ENCODE measurements at regions of chr9 and their contacts with region 1.

Region 1: DNA sequence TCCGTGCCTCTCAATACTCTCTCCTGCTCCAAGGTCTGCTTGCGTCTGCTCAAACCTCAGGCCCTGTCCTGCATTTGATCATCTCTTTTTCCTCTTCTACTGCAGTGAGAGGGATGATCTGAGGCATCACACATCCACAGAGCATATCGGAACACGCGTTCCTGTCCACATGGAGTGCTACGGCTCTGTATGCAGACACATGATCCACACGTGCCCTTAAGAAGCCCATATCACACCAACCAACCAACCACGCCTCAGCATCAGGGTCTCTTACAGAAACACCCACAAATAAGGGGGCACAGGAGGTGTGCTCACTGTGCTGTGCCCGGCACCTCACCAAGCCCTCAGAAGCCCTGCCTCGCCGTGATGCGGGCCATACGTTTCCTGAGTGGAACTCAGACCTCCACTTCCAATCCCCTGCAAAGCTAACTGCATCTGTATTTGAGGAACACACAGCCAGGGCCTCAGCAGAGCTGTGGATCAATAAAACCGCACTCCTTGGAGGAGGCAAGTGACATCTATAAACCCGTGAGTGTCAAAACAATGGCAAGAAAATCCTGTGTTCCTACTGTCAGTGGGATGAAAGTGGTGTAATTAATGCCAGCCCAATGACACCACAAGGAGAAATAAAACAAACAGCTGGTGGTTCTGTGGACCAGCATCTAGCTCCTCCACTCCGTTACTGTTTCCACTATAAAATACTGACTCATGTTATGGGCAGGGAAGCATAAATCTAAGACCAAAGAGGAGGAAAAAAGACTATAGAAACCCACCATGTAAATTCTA is 40.4 kb downstream of the AK8 start:
- DNase-seq: no peak
- ATAC-seq: no peak
- H3K4me3 ChIP-seq: no peak overlapping the region
- H3K27ac ChIP-seq: no peak overlapping the region
- H3K4me1 ChIP-seq: no peaks in the 10 kb centered on the region; a peak in 1 of 5 replicates
- H3K27me3 ChIP-seq: peaks cover 52 to 68% of the 10 kb centered on the region in 2 experiments
- CTCF ChIP-seq: no peak
- EP300 ChIP-seq: no peak
- POLR2A ChIP-seq: no peak
- RAD21 ChIP-seq: no peak

Region 2: DNA sequence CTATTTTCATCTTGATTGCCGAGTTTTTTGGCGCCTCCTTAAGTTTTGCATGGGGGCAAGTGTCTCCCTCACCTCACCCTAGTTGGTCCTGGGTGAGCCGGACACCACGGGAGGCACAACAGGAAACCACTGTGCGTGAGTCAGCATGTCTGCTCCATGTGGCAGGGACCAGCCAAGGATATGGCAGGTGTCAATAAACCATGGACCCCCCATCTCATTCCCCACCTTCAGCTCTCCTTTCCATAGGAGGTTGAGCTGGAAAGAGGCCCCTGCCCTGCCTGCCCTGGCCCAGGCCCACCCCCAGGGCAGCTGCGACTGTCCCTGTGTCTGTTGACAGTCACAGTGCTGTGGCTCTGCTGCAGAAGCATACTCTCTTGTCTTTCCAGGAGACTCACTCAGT is 44.1 kb after region 1 on chr9:
- CTCF ChIA-PET with region 1: no interaction called
- POLR2A ChIA-PET with region 1: no interaction called
- in situ Hi-C with region 1: no loop called
- intact Hi-C with region 1: loop called (anchors 2 kb)
- DNase-seq: no peak
- ATAC-seq: no peak
- H3K4me3 ChIP-seq: no peak overlapping the region
- H3K27ac ChIP-seq: no peak overlapping the region
- H3K4me1 ChIP-seq: peaks cover 0 to 18% of the 10 kb centered on the region in 2 experiments; a peak in 3 of 5 replicates
- H3K27me3 ChIP-seq: peaks cover 26 to 44% of the 10 kb centered on the region in 2 experiments; a peak in 4 of 5 replicates
- CTCF ChIP-seq: no peak
- EP300 ChIP-seq: no peak
- POLR2A ChIP-seq: no peak
- RAD21 ChIP-seq: no peak

Region 3: GRCh38 chr9:133184962-133185361 is 347.3 kb after region 1 on chr9:
- CTCF ChIA-PET with region 1: no interaction called
- POLR2A ChIA-PET with region 1: no interaction called
- in situ Hi-C with region 1: no loop called
- intact Hi-C with region 1: no loop called
- DNase-seq: peak; percentile 69 to 83 (median 70)
- ATAC-seq: peak; percentile 86
- H3K4me3 ChIP-seq: no peak overlapping the region
- H3K27ac ChIP-seq: no peak overlapping the region
- H3K4me1 ChIP-seq: peaks cover 4 to 15% of the 10 kb centered on the region in 2 experiments; a peak in 3 of 5 replicates
- H3K27me3 ChIP-seq: peaks cover 19 to 34% of the 10 kb centered on the region in 2 experiments; a peak in 4 of 5 replicates
- CTCF ChIP-seq: peak; percentile 71 to 88 (median 86)
- EP300 ChIP-seq: no peak
- POLR2A ChIP-seq: no peak
- RAD21 ChIP-seq: peak; percentile 63 to 84

Measured in K562 (cell line).